ENCODE measurements at regions of chr1 and their contacts with region 1.

Region 1: DNA sequence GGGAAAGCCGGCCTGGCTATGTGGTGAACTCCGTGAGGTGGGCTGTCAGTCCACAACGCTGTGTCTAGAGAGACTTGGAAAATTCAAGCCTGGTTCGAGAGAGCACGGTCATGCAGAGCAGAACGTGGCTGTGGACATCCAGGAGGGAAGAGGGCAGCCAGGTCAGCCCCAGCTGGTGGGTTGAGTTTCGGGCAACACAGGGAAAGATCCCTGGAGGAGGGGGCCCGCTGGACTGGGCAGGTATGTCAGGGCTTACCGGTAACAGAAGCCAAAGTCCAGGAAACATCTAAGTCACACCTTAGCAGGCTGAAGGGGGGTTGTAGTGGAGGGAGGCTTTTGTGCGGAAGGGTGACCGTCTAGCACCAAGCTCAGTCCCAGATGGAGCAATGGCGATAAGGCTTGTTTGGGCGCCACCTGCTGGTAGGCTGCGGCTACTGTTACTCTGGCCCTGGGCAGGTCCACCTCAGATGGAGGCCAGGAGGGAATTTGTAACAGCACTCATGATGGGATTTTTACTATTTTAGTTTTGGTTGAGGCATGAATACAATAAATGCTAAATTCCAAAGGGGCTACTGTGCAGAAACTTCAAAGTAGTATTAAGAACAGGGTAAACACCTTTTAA is 143.3 kb upstream of the ZNF644 start:
- DNase-seq: peak; percentile 58 to 72
- H3K4me3 ChIP-seq: no peak overlapping the region
- H3K27ac ChIP-seq: no peak overlapping the region
- H3K4me1 ChIP-seq: peaks cover 14% of the 10 kb centered on the region
- H3K27me3 ChIP-seq: no peaks in the 10 kb centered on the region
- CTCF ChIP-seq: peak; percentile 99

Region 2: GRCh38 chr1:90721210-90722194 is 443.6 kb before region 1 on chr1:
- CTCF ChIA-PET with region 1: interaction called, 13 read pairs
- POLR2A ChIA-PET with region 1: no interaction called
- intact Hi-C with region 1: loop called (anchors 1 kb)
- DNase-seq: peak; percentile 52 to 71
- H3K4me3 ChIP-seq: peak overlapping the region; percentile 20; the same call in 1 of the 2 replicates
- H3K27ac ChIP-seq: no peak overlapping the region
- H3K4me1 ChIP-seq: no peaks in the 10 kb centered on the region
- H3K27me3 ChIP-seq: no peaks in the 10 kb centered on the region
- CTCF ChIP-seq: peak; percentile 99

Region 3: GRCh38 chr1:91021686-91022517 is 143.2 kb before region 1 on chr1 and contains the start of gene ZNF644:
- CTCF ChIA-PET with region 1: interaction called, 6 read pairs
- POLR2A ChIA-PET with region 1: interaction called, 8 read pairs
- intact Hi-C with region 1: loop called (anchors 10 kb)
- DNase-seq: peak; percentile 85 to 92
- H3K4me3 ChIP-seq: peak within 1 kb of the TSS; percentile 74
- H3K27ac ChIP-seq: peak within 1 kb of the TSS; percentile 98
- H3K4me1 ChIP-seq: peaks cover 50% of the 10 kb centered on the region
- H3K27me3 ChIP-seq: no peaks in the 10 kb centered on the region
- CTCF ChIP-seq: no peak
- total RNA-seq, gene ZNF644: 36.5 and 37.9 TPM in 2 replicates

Region 4: GRCh38 chr1:91404151-91405012 is 239.2 kb after region 1 on chr1 and contains the start of gene HFM1:
- CTCF ChIA-PET with region 1: no interaction called
- POLR2A ChIA-PET with region 1: no interaction called
- intact Hi-C with region 1: loop called (anchors 10 kb)
- DNase-seq: peak; percentile 27 to 50
- H3K4me3 ChIP-seq: peak within 1 kb of the TSS; percentile 73
- H3K27ac ChIP-seq: no peak within 1 kb of the TSS
- H3K4me1 ChIP-seq: no peaks in the 10 kb centered on the region; the same call in 1 of the 2 replicates
- H3K27me3 ChIP-seq: no peaks in the 10 kb centered on the region
- CTCF ChIP-seq: no peak
- total RNA-seq, gene HFM1: not detected in 2 replicates

Measured in PC-9 (cell line).